A673 (cell line): ENCODE measurements at regions of chr1 and their contacts with region 1.

Region 1: DNA sequence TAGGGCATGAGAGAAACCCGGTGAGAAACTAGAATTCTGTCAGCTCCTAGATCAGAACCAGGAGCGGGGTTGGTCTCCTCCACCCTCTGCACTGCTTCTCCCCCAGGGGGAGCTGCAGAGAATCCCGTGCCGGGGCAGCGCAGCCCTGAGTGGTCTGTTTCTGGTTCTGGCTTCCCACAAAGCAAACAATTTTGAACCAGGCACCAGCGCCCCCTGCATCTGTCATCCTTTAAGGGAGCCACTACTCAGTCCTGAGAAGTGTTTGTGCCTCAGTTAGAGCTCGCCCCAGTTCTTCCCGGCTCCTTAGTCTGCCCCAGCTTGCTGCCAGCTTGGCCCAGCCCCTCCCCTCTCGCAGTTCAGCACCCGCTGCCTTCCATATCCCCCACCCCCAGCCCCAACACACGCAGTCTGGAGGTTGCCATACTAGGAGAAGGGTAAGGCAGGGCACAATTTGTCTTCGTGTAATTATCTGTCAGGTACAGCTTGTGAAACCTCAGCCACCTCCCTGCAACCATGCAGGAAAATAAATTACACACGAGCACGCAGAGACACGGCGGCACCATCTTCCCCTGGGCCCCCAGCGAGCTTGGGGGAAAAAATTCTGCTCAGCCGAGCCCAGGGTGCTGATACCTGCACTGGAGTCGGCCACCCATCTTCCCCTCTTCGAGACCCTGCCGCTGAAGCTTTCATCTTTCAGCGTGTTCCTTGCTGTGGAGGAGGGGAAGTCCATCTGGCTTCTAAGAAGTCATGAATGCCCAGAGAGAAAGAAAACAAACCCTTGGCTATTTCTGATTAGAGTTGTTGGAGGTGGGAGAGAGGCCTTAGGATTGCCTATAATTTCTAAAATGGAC is 62.6 kb upstream of the CD1D start:
- DNase-seq: peak; percentile 79
- H3K4me3 ChIP-seq: no peak overlapping the region
- H3K27ac ChIP-seq: peak overlapping the region; percentile 76
- H3K4me1 ChIP-seq: peaks cover 65% of the 10 kb centered on the region
- H3K27me3 ChIP-seq: no peaks in the 10 kb centered on the region
- CTCF ChIP-seq: peak; percentile 67

Region 2: GRCh38 chr1:157992031-157992832 is 125.8 kb before region 1 on chr1:
- CTCF ChIA-PET with region 1: interaction called, 46 read pairs
- POLR2A ChIA-PET with region 1: interaction called, 3 read pairs
- intact Hi-C with region 1: loop called (anchors 1 kb)
- DNase-seq: peak; percentile 91
- H3K4me3 ChIP-seq: peak overlapping the region; percentile 97
- H3K27ac ChIP-seq: peak overlapping the region; percentile 99
- H3K4me1 ChIP-seq: peaks cover 30% of the 10 kb centered on the region
- H3K27me3 ChIP-seq: no peaks in the 10 kb centered on the region
- CTCF ChIP-seq: peak; percentile 99

Region 3: DNA sequence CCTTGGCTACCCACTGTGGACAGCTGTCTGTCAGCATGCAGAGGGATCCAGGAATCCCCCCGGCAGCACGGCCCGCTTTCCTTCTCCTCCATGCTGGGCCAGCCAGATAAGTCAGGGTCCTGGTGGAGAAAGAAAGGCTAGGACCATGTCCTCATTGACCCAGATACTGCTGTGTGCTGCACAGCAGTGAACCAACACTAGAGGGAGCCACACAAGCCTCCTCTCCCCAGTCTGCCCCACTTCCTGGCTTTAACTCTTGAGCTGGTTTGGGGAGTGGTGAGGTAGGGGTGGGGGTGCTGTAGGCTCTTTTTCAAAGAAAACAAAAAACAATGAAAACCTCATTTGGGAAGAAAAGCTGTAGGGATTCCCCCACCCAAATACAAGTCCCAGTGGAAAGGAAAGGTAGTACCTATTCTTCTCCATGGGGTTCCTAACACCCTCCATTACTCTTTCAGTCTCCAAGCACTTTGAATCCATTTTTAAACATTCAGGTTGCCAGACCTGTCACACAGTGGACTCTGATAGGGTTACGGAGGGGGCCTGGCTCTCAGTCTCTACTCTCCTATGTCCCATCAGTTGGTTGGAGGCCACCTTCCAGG is 22.2 kb before region 1 on chr1:
- CTCF ChIA-PET with region 1: interaction called, 88 read pairs
- POLR2A ChIA-PET with region 1: no interaction called
- intact Hi-C with region 1: loop called (anchors 1 kb)
- DNase-seq: peak; percentile 75
- H3K4me3 ChIP-seq: no peak overlapping the region
- H3K27ac ChIP-seq: peak overlapping the region; percentile 66
- H3K4me1 ChIP-seq: peaks cover 40% of the 10 kb centered on the region
- H3K27me3 ChIP-seq: no peaks in the 10 kb centered on the region
- CTCF ChIP-seq: peak; percentile 97

Region 4: DNA sequence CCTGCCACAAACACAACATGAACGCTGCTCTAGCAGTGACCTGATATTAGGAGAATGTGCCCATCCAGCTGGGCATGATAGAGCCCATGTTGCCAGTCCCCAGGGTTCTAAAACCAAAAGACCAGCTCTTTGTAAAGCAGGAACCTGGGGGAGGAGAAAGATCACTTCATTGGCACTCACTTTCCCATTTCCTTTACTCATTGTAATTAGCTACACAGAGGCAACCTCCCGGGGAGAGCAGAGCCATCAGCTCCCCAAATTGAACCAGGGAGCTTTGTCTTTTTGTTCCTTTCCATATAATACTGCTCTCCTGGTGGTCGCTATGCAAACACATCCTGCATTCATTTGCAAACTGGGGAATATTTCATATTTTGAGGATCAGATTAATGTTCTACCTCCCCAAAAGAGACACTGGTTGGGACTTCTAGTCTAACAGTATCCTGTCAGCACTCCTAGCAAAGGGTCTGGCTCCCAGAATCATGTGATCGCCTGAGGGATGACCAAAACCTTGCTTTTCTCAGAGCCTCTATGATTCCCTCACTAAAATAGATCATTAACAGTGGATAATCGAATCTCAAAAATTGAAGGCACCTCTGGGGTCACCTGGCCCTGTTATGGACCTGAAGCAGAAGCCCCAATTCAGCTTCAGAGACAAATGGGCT is 14.1 kb before region 1 on chr1:
- CTCF ChIA-PET with region 1: interaction called, 88 read pairs
- POLR2A ChIA-PET with region 1: interaction called, 4 read pairs
- intact Hi-C with region 1: no loop called
- DNase-seq: peak; percentile 93
- H3K4me3 ChIP-seq: no peak overlapping the region
- H3K27ac ChIP-seq: peak overlapping the region; percentile 66
- H3K4me1 ChIP-seq: peaks cover 72% of the 10 kb centered on the region
- H3K27me3 ChIP-seq: no peaks in the 10 kb centered on the region
- CTCF ChIP-seq: no peak

Region 5: DNA sequence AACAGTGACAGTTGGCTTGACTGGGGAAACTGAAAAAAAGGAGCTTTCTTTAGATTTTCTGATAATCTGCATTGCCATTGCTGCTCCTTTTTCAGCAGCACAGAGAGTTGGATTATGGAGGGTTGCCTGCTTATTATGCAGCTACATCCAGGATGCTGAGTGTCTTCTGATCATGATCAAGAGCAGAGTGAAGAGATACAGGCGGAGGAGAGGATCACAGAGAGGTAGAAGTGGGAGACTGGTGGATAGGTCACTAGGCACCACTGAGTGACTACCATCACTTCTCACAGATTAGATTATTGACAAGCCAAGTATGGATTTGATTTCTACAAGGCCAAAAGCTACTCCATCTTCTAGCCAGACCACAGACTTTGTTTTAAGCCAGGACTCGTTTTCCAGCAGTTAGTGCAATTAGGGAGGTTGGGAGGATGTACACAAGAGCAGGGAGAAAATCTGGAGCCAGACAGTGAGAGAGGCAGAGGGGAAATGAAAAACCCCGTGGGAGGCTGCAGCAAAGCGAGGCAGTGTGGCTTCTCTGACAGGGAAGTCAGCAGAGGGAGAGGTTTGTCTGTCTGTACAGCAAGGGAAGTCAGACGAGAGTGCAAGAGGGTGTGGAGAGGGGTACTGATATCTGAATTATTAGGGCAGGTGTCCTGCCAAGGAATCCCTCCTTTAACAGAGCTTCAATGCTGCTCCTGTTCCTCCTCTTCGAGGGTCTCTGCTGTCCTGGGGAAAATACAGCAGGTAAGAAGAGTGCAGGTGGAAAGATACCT is 235.4 kb after region 1 on chr1 and contains the start of gene CD1E:
- CTCF ChIA-PET with region 1: no interaction called
- POLR2A ChIA-PET with region 1: no interaction called
- intact Hi-C with region 1: no loop called
- DNase-seq: no peak
- H3K4me3 ChIP-seq: no peak within 1 kb of the TSS
- H3K27ac ChIP-seq: no peak within 1 kb of the TSS
- H3K4me1 ChIP-seq: no peaks in the 10 kb centered on the region
- H3K27me3 ChIP-seq: peaks cover 21% of the 10 kb centered on the region
- CTCF ChIP-seq: no peak
- total RNA-seq, gene CD1E: not detected in 2 replicates